ENCODE measurements at regions of chr4 and their contacts with region 1.

Region 1: DNA sequence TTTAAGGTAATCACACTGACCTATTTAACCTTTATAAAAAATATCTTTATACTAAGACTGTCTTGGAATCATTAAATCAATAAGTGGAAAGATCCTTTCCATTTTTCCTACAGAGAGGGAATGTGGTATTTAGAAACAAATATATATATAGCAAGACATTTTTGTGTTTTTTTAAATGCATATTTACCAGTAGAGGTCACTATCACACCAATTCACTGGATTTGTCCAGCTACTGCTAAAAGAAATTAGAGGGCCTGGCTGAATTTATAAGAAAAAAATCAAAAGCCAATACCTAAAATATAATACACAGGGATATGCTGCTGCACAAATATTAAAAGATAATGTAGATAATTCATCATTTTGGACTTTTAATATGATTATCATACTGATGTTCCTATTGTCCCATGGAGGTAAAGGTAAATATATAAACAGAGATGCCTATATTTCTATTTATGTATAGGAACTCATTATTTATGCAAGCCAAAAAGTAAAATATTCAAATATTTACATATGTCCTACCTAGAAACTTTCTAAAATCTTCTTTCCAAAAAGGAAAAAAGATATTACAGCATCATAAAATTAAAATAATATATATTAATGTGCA is 69.5 kb downstream of the PDE5A start:
- DNase-seq: peak; percentile 61
- H3K4me3 ChIP-seq: no peak overlapping the region
- H3K27ac ChIP-seq: no peak overlapping the region
- H3K4me1 ChIP-seq: no peaks in the 10 kb centered on the region
- H3K27me3 ChIP-seq: no peaks in the 10 kb centered on the region
- CTCF ChIP-seq: peak; percentile 10 to 17
- POLR2A ChIP-seq: no peak

Region 2: DNA sequence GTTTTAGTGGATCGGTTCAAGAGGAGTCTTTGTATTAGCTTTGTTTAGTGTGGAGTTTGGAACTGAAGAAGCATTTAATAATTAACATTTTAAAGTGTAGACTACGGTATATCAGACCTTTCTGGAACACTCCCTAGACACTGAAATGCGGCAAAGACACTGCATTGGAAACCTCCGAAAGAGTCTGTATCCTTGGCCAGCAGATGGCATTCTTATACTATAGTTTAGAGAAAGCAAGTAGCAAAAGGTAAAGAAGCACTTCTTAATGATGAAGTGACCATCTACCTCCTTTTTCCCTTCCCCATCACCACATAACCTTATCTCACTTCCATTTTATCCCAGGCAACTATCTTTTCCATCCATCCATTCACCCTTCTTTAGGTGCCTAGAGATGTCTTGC is 244.8 kb before region 1 on chr4:
- CTCF ChIA-PET with region 1: no interaction called
- POLR2A ChIA-PET with region 1: no interaction called
- dilution Hi-C with region 1: no loop called
- intact Hi-C with region 1: loop called (anchors 2 kb)
- DNase-seq: peak; percentile 53
- H3K4me3 ChIP-seq: no peak overlapping the region
- H3K27ac ChIP-seq: no peak overlapping the region
- H3K4me1 ChIP-seq: no peaks in the 10 kb centered on the region
- H3K27me3 ChIP-seq: peaks cover 5 to 15% of the 10 kb centered on the region in 2 experiments
- CTCF ChIP-seq: peak; percentile 23 to 41
- POLR2A ChIP-seq: no peak

Region 3: GRCh38 chr4:119525005-119525749 is 34.0 kb before region 1 on chr4:
- CTCF ChIA-PET with region 1: interaction called, 7 read pairs
- POLR2A ChIA-PET with region 1: no interaction called
- dilution Hi-C with region 1: no loop called
- intact Hi-C with region 1: loop called (anchors 2 kb)
- DNase-seq: peak; percentile 90
- H3K4me3 ChIP-seq: peak overlapping the region in 1 of 3 experiments; percentile 63
- H3K27ac ChIP-seq: peak overlapping the region; percentile 99
- H3K4me1 ChIP-seq: peaks cover 47% of the 10 kb centered on the region
- H3K27me3 ChIP-seq: no peaks in the 10 kb centered on the region
- CTCF ChIP-seq: no peak
- POLR2A ChIP-seq: no peak

Region 4: GRCh38 chr4:119785963-119786362 is 226.8 kb after region 1 on chr4:
- CTCF ChIA-PET with region 1: interaction called, 14 read pairs
- POLR2A ChIA-PET with region 1: no interaction called
- dilution Hi-C with region 1: no loop called
- intact Hi-C with region 1: loop called (anchors 1 kb)
- DNase-seq: peak; percentile 20
- H3K4me3 ChIP-seq: no peak overlapping the region
- H3K27ac ChIP-seq: no peak overlapping the region
- H3K4me1 ChIP-seq: no peaks in the 10 kb centered on the region
- H3K27me3 ChIP-seq: peaks cover 2 to 4% of the 10 kb centered on the region in 2 experiments
- CTCF ChIP-seq: no peak
- POLR2A ChIP-seq: no peak

Region 5: GRCh38 chr4:120049732-120050494 is 490.8 kb after region 1 on chr4:
- CTCF ChIA-PET with region 1: interaction called, 46 read pairs
- POLR2A ChIA-PET with region 1: no interaction called
- dilution Hi-C with region 1: no loop called
- intact Hi-C with region 1: loop called (anchors 1 kb)
- DNase-seq: peak; percentile 76
- H3K4me3 ChIP-seq: no peak overlapping the region
- H3K27ac ChIP-seq: no peak overlapping the region
- H3K4me1 ChIP-seq: peaks cover 3% of the 10 kb centered on the region
- H3K27me3 ChIP-seq: no peaks in the 10 kb centered on the region
- CTCF ChIP-seq: peak; percentile 77 to 79
- POLR2A ChIP-seq: no peak

Region 6: GRCh38 chr4:120056246-120056645 is 497.1 kb after region 1 on chr4:
- CTCF ChIA-PET with region 1: interaction called, 46 read pairs
- POLR2A ChIA-PET with region 1: no interaction called
- dilution Hi-C with region 1: no loop called
- intact Hi-C with region 1: no loop called
- DNase-seq: peak; percentile 19
- H3K4me3 ChIP-seq: no peak overlapping the region
- H3K27ac ChIP-seq: no peak overlapping the region
- H3K4me1 ChIP-seq: no peaks in the 10 kb centered on the region
- H3K27me3 ChIP-seq: no peaks in the 10 kb centered on the region
- CTCF ChIP-seq: no peak
- POLR2A ChIP-seq: no peak

Measured in endothelial cell of umbilical vein (primary cell).